ENCODE measurements at regions of chr4 and their contacts with region 1.

Region 1: DNA sequence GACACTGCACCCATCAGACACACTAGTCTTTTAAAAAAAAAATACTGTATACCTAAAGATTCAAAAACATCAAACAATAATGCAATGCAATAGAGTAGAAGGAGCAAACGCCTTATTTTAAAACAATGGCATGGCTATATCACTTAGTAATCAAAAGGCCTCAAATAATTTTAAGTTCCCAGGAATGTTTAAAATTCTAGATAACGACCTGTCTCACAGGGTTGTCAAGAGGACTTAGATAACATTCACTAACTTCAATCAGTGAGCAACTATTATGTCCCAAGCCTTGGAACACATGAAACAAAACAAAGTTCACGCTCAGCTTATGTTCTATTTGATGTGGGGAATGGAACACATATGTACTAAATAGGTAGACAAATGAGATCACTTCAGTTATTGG is 106.5 kb downstream of the FRYL start:
- DNase-seq: no peak
- ATAC-seq: no peak
- H3K4me3 ChIP-seq: no peak overlapping the region
- H3K4me1 ChIP-seq: peaks cover 4% of the 10 kb centered on the region
- CTCF ChIP-seq: no peak

Region 2: DNA sequence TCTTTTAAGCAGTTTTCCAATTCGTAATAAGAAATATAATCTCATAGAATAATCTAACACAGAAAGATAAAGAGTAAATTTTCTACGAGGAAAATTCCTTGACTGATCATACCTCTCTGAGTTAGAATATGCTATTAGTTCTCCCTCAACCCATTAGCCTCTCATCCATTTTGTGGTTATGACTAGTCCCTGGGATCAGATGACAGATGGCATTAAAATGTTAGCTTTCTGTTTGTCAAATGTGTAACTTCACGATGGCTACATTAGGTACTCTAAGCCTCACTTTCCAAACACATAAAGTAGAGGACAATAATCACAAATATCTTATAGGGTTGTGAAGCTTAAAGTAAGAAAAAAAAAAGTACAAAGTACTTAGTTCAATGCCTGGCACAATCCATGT is 71.3 kb before region 1 on chr4:
- intact Hi-C with region 1: loop called in 1 of 2 experiments (anchors 10 kb)
- DNase-seq: no peak
- ATAC-seq: peak; percentile 1
- H3K4me3 ChIP-seq: no peak overlapping the region
- H3K4me1 ChIP-seq: peaks cover 36% of the 10 kb centered on the region
- CTCF ChIP-seq: no peak

Region 3: GRCh38 chr4:48642421-48643374 is 30.8 kb before region 1 on chr4:
- intact Hi-C with region 1: no loop called
- DNase-seq: no peak
- ATAC-seq: no peak
- H3K4me3 ChIP-seq: no peak overlapping the region
- H3K4me1 ChIP-seq: peaks cover 28% of the 10 kb centered on the region
- CTCF ChIP-seq: no peak